PC-9 (cell line): ENCODE measurements at regions of chr14 and their contacts with region 1.

Region 1: GRCh38 chr14:103160866-103161391 is 37.7 kb downstream of the TNFAIP2 start:
- DNase-seq: peak; percentile 95 to 100
- H3K4me3 ChIP-seq: no peak overlapping the region
- H3K27ac ChIP-seq: peak overlapping the region; percentile 89
- H3K4me1 ChIP-seq: peaks cover 68% of the 10 kb centered on the region
- H3K27me3 ChIP-seq: no peaks in the 10 kb centered on the region
- CTCF ChIP-seq: no peak

Region 2: DNA sequence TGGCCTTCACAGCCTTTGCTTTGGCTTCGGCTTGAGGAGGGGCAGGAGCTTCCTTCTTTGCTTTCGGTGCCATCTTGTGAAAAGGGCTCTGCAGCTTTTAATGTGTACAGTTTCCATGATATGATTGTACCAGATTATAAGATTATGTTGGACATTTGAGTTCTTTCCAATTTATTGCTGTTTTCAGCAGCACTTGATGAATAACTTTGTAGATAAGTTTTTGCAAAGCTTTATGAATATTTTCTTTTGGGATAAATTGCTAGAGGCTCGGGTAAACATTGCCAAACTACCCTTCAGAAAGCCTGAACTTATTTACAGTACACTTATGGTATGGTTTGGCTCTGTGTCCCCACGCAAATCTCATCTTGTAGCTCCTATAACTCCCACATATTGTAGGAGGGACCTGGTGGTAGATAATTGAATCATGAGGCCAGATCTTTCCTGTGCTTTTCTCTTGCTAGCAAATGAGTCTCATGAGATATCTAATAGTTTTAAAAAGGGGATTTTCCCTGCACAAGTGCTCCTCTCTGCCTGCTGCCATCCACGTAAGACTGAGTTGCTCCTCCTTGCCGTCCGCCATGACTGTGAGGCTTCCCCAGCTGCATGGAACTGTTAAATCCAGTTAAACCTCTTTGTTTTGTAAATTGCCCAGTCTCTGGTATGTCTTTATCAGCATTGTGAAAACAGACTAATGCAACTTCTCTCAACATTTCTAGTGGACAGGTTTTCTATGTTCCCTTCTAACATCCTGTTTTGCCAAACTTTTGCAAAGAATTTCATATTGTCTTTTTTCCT is 498.1 kb before region 1 on chr14:
- CTCF ChIA-PET with region 1: no interaction called
- POLR2A ChIA-PET with region 1: no interaction called
- intact Hi-C with region 1: no loop called
- DNase-seq: no peak
- H3K4me3 ChIP-seq: no peak overlapping the region
- H3K27ac ChIP-seq: peak overlapping the region; percentile 5; the same call in 1 of the 2 replicates
- H3K4me1 ChIP-seq: peaks cover 27% of the 10 kb centered on the region
- H3K27me3 ChIP-seq: no peaks in the 10 kb centered on the region
- CTCF ChIP-seq: no peak

Region 3: GRCh38 chr14:103141119-103141796 is 19.7 kb before region 1 on chr14:
- CTCF ChIA-PET with region 1: no interaction called
- POLR2A ChIA-PET with region 1: interaction called, 14 read pairs
- intact Hi-C with region 1: loop called (anchors 1 kb)
- DNase-seq: peak; percentile 78 to 84
- H3K4me3 ChIP-seq: no peak overlapping the region
- H3K27ac ChIP-seq: 0 out of 2 replicates have a peak overlapping the region, but pooled peaks have one; percentile 30
- H3K4me1 ChIP-seq: peaks cover 59% of the 10 kb centered on the region
- H3K27me3 ChIP-seq: no peaks in the 10 kb centered on the region
- CTCF ChIP-seq: peak; percentile 99

Region 4: GRCh38 chr14:103172920-103173319 is 12.0 kb after region 1 on chr14:
- CTCF ChIA-PET with region 1: no interaction called
- POLR2A ChIA-PET with region 1: interaction called, 5 read pairs
- intact Hi-C with region 1: loop called (anchors 1 kb)
- DNase-seq: peak; percentile 67 to 94
- H3K4me3 ChIP-seq: peak overlapping the region; percentile 15; the same call in 1 of the 2 replicates
- H3K27ac ChIP-seq: peak overlapping the region; percentile 65
- H3K4me1 ChIP-seq: peaks cover 34% of the 10 kb centered on the region
- H3K27me3 ChIP-seq: no peaks in the 10 kb centered on the region
- CTCF ChIP-seq: no peak

Region 5: DNA sequence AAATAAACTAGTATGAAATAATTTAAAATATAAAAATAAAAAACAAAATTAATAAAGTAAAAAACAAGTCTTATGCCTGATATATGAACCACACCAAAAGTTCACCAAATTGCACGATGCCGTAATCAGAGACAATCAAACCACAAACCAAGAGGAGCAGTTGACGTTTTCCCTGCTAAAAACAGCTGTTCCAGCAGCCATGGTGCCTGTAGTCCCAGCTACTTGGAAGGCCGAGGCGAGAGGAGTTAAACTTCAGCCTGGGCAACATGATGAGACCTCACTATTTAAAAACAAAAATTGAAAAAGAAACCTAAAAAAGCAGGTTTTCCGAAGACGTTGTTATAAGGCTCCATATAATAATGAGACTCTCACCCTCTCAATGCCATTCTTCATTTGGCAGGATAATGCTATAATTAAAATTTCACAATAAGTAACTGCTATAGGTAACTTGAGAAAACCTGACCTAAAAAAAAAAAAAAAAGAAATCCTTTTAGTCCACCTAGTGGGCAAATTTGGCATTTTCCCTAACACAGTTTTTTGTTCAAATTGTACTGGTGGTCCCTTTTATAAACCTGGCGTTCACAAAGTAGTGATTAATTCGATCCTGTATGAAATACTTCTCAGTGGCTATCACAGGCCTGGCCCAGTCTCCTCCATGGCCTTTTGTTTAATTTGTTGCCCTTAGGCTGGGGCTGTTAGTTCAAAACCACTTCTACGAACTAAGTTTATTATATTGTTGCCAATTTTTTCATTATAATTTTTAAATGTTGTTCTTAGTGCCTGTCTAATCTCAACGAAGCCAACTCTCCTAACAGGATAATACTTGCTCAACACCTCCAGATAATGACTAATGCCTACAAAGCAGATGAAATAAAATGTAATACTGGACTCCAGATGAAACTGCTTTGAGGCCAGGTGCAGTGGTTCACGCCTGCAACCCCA is 24.4 kb after region 1 on chr14:
- CTCF ChIA-PET with region 1: interaction called, 5 read pairs
- POLR2A ChIA-PET with region 1: interaction called, 7 read pairs
- intact Hi-C with region 1: loop called (anchors 1 kb)
- DNase-seq: peak; percentile 49 to 96
- H3K4me3 ChIP-seq: peak overlapping the region; percentile 14; the same call in 1 of the 2 replicates
- H3K27ac ChIP-seq: peak overlapping the region; percentile 92
- H3K4me1 ChIP-seq: peaks cover 37% of the 10 kb centered on the region
- H3K27me3 ChIP-seq: no peaks in the 10 kb centered on the region
- CTCF ChIP-seq: peak; percentile 100

Region 6: DNA sequence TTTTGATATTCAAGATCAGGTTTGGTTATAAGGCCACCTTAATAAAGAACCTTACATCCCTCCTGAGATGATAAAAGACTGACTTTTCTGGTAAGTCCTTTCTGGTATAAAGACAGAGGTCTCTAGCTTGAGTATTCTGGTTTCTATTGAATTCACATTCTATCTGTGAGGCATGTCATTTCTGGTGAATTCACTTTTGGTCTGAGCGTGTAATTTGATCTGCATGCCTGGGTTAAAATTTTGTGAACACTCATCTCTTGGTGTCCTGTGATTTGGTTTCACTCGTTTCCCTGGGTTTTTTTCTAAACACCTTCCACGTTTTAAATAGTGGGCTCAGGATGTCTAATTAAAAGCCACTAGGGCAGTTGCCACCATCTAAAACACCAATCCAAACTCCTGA is 185.4 kb after region 1 on chr14:
- CTCF ChIA-PET with region 1: no interaction called
- POLR2A ChIA-PET with region 1: interaction called, 23 read pairs
- intact Hi-C with region 1: no loop called
- DNase-seq: no peak
- H3K4me3 ChIP-seq: no peak overlapping the region
- H3K27ac ChIP-seq: peak overlapping the region; percentile 18
- H3K4me1 ChIP-seq: peaks cover 6% of the 10 kb centered on the region; the same call in 1 of the 2 replicates
- H3K27me3 ChIP-seq: no peaks in the 10 kb centered on the region
- CTCF ChIP-seq: no peak

Region 7: GRCh38 chr14:104064003-104064402 is 903.1 kb after region 1 on chr14:
- CTCF ChIA-PET with region 1: no interaction called
- POLR2A ChIA-PET with region 1: no interaction called
- intact Hi-C with region 1: no loop called
- DNase-seq: no peak
- H3K4me3 ChIP-seq: no peak overlapping the region
- H3K27ac ChIP-seq: no peak overlapping the region
- H3K4me1 ChIP-seq: no peaks in the 10 kb centered on the region
- H3K27me3 ChIP-seq: peaks cover 51% of the 10 kb centered on the region
- CTCF ChIP-seq: no peak